ENCODE measurements at regions of chr1 and their contacts with region 1.

Region 1: GRCh38 chr1:6019166-6019845 is 26.4 kb upstream of the KCNAB2 start:
- DNase-seq: no peak
- H3K4me3 ChIP-seq: no peak overlapping the region
- H3K27ac ChIP-seq: no peak overlapping the region
- H3K4me1 ChIP-seq: no peaks in the 10 kb centered on the region
- H3K27me3 ChIP-seq: no peaks in the 10 kb centered on the region
- CTCF ChIP-seq: no peak
- POLR2A ChIP-seq: no peak

Region 2: DNA sequence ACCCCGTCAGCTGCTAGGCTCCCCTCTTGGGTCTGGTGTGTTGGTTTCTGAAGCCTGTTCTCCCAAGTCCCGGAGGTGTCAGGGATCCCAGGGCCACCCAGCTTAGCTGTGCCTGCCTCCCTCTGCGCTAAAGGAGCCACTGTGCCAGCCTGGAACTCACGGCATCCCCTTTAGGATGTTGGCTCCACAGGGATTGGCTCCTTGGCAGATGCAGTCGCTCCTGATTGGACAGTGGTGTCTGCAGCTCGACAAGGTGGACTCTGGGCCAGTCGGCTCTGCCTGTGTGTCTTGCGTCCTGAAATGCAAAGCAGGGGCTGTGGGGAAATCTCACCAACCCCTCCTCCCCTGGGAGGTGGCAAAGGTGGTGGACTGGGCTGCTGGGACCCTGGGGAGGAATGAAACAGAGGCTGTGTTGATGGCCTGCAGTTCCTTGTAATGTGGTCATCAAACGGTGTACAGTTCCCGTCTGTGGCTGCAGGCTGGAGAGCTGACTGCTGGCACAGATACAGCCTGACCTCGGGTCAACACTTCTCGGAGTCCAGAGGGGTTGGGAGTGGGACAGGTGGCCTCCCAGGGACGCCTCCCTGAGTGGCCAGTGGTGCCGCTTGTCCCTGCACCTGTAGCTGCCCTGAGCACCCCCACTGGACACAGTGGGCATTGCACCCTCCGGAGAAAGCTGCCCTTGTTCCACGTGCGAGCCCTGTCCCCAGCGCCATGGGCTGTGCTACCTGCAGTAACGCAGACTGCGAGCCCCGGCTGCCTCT is 14.9 kb after region 1 on chr1:
- CTCF ChIA-PET with region 1: interaction called, 12 read pairs
- POLR2A ChIA-PET with region 1: no interaction called
- dilution Hi-C with region 1: no loop called
- intact Hi-C with region 1: no loop called
- DNase-seq: peak; percentile 30
- H3K4me3 ChIP-seq: no peak overlapping the region
- H3K27ac ChIP-seq: no peak overlapping the region
- H3K4me1 ChIP-seq: no peaks in the 10 kb centered on the region
- H3K27me3 ChIP-seq: peaks cover 0 to 2% of the 10 kb centered on the region in 2 experiments
- CTCF ChIP-seq: peak; percentile 55 to 82
- POLR2A ChIP-seq: no peak

Measured in endothelial cell of umbilical vein (primary cell).